Activated T-helper 2 cell treated with anti-CD3 and anti-CD28 coated beads, Interferon-gamma antibody, Interleukin-2, Interleukin-4, amounts not matched to agents 10 μg/mL and 5 μg/mL and 100 μg/mL, durations not matched to agents 14 hours and 24 hours and 36 hours (primary cell): ENCODE measurements at regions of chr5 and their contacts with region 1.

Region 1: GRCh38 chr5:100903039-100903887 is at the start of gene ST8SIA4:
- DNase-seq: peak; percentile 92
- H3K4me3 Mint-ChIP-seq: peak within 1 kb of the TSS; percentile 97
- H3K27ac Mint-ChIP-seq: peak within 1 kb of the TSS; percentile 97
- H3K4me1 Mint-ChIP-seq: peaks cover 41% of the 10 kb centered on the region
- H3K27me3 Mint-ChIP-seq: no peaks in the 10 kb centered on the region
- total RNA-seq, gene ST8SIA4: 79.1 and 82.3 TPM in 2 replicates

Region 2: GRCh38 chr5:98928873-98929696 is 1974.2 kb before region 1 on chr5 and contains the start of gene CHD1:
- intact Hi-C with region 1: loop called (anchors 2 kb)
- DNase-seq: peak; percentile 92
- H3K4me3 Mint-ChIP-seq: peak within 1 kb of the TSS; percentile 98
- H3K27ac Mint-ChIP-seq: peak within 1 kb of the TSS; percentile 99
- H3K4me1 Mint-ChIP-seq: peaks cover 41% of the 10 kb centered on the region
- H3K27me3 Mint-ChIP-seq: no peaks in the 10 kb centered on the region
- total RNA-seq, gene CHD1: 67.6 and 72.1 TPM in 2 replicates

Region 3: GRCh38 chr5:100623719-100624118 is 279.5 kb before region 1 on chr5:
- intact Hi-C with region 1: loop called (anchors 5 kb)
- DNase-seq: no peak
- H3K4me3 Mint-ChIP-seq: no peak overlapping the region
- H3K27ac Mint-ChIP-seq: no peak overlapping the region
- H3K4me1 Mint-ChIP-seq: peaks cover 4% of the 10 kb centered on the region
- H3K27me3 Mint-ChIP-seq: peaks cover 20% of the 10 kb centered on the region

Region 4: GRCh38 chr5:100746730-100747129 is 156.5 kb before region 1 on chr5:
- intact Hi-C with region 1: no loop called
- DNase-seq: no peak
- H3K4me3 Mint-ChIP-seq: peak overlapping the region; percentile 52
- H3K27ac Mint-ChIP-seq: peak overlapping the region; percentile 52
- H3K4me1 Mint-ChIP-seq: peaks cover 11% of the 10 kb centered on the region
- H3K27me3 Mint-ChIP-seq: peaks cover 14% of the 10 kb centered on the region

Region 5: GRCh38 chr5:100777680-100778281 is 125.5 kb before region 1 on chr5:
- intact Hi-C with region 1: loop called (anchors 1 kb)
- DNase-seq: no peak
- H3K4me3 Mint-ChIP-seq: peak overlapping the region; percentile 30
- H3K27ac Mint-ChIP-seq: peak overlapping the region; percentile 31
- H3K4me1 Mint-ChIP-seq: peaks cover 41% of the 10 kb centered on the region
- H3K27me3 Mint-ChIP-seq: no peaks in the 10 kb centered on the region

Region 6: GRCh38 chr5:100840384-100840783 is 62.9 kb before region 1 on chr5:
- intact Hi-C with region 1: loop called (anchors 1 kb)
- DNase-seq: no peak
- H3K4me3 Mint-ChIP-seq: no peak overlapping the region
- H3K27ac Mint-ChIP-seq: peak overlapping the region; percentile 93
- H3K4me1 Mint-ChIP-seq: peaks cover 73% of the 10 kb centered on the region
- H3K27me3 Mint-ChIP-seq: no peaks in the 10 kb centered on the region

Region 7: GRCh38 chr5:100860407-100860806 is 42.9 kb before region 1 on chr5:
- intact Hi-C with region 1: loop called (anchors 1 kb)
- DNase-seq: no peak
- H3K4me3 Mint-ChIP-seq: peak overlapping the region; percentile 64
- H3K27ac Mint-ChIP-seq: peak overlapping the region; percentile 93
- H3K4me1 Mint-ChIP-seq: peaks cover 66% of the 10 kb centered on the region
- H3K27me3 Mint-ChIP-seq: no peaks in the 10 kb centered on the region

Region 8: DNA sequence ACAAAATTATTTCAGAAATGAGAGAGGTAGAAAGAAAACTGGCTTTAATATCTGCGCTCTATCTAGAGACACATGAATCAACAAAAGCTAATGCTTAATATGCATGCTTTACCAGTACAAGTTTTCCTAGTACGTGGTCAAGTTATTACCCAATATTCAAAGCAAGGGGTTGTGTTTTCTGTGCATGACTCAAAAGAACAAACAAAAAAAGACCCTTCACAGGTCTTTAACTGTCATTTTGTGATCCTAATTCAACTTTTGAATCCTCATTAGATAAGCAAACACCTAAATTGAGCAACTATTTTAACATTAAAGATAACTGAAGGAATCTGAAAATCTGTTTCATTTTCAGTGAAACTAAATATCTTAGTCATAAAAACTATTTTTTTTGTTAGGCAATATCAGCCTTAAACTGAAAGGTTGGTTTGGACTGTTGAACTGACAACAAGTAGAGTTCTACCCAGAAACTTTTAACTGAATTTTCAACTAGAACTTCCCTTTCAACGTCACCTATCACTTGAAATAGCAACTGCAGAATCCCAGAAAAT is 12.7 kb before region 1 on chr5:
- intact Hi-C with region 1: loop called (anchors 1 kb)
- DNase-seq: no peak
- H3K4me3 Mint-ChIP-seq: peak overlapping the region; percentile 75
- H3K27ac Mint-ChIP-seq: peak overlapping the region; percentile 93
- H3K4me1 Mint-ChIP-seq: peaks cover 74% of the 10 kb centered on the region
- H3K27me3 Mint-ChIP-seq: no peaks in the 10 kb centered on the region

Region 9: DNA sequence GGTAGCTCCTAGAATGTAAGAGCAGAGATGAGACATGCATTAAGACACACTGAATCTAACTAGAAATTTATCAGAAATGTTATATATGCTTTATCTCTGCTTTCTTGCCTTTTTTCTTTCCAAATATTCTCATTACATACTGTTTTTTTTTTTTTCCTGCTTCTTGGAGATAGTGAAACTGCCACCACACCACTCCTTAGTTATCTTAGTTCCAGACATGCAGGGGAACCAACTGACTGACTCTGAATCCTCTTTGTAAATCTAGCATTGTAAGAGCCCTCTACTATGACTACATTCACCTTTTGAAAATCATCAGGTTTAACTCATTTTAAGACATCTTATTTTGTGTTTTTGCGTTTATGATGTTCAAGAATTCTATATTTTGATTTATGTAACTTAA is 181.1 kb after region 1 on chr5:
- intact Hi-C with region 1: no loop called
- DNase-seq: no peak
- H3K4me3 Mint-ChIP-seq: no peak overlapping the region
- H3K27ac Mint-ChIP-seq: no peak overlapping the region
- H3K4me1 Mint-ChIP-seq: no peaks in the 10 kb centered on the region
- H3K27me3 Mint-ChIP-seq: no peaks in the 10 kb centered on the region